Activated CD4-positive, alpha-beta T cell treated with anti-CD3 and anti-CD28 coated beads for 36 hours (primary cell): ENCODE measurements at regions of chr7 and their contacts with region 1.

Region 1: GRCh38 chr7:876167-876967 is at the start of gene GET4:
- DNase-seq: peak; percentile 96
- ATAC-seq: peak; percentile 79
- H3K4me3 Mint-ChIP-seq: peak within 1 kb of the TSS; percentile 92
- H3K27ac Mint-ChIP-seq: peak within 1 kb of the TSS; percentile 87
- H3K4me1 Mint-ChIP-seq: peaks cover 27% of the 10 kb centered on the region
- H3K27me3 Mint-ChIP-seq: no peaks in the 10 kb centered on the region
- total RNA-seq, gene GET4: 17.7 to 29.7 TPM

Region 2: DNA sequence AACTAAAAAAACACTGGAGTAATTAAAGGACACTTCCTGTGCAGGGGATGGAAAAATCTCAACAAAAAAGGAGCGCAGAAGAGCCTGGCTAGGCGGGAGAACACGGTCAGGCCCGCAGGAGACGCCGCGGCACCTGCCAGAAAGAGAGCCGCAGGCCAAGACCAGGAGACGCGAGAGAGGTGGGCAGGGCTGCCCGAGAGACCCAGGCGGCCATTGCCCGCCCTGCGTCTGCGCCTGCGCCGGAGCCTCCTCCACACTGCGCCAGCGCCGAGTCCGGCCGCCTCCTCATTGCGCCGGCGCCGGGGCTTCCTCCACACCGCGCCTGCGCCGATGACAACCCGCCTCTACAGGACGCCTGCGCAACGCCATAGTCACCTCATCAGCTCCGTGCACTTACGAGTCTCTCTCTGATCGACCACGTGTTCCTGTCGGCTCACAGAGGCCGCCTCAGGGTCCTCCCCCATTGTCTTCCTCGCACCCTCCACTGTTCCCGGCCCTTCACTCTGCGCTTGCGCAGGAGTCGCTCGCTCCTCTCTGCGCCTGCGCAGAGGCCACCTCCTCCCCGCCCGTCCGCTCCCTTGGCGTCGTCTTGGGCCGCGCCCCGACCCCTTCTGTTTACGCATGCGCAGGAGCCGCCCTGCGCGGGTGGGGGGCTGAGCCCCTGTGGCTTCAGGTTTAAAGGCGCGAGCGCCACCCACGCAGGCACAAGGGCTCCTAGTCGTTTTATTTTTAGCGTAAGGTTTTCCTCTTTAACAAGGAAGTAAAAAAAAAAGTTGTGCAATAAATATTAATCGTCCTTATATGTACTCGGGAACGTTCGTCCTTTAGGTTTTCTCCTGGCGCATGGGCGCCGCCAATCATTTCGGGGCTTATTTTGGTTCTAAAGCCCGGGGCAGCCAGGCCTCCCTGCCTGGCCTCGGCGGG is 727.2 kb before region 1 on chr7:
- CTCF ChIA-PET with region 1: no interaction called
- POLR2A ChIA-PET with region 1: no interaction called
- intact Hi-C with region 1: loop called in 1 of 2 experiments (anchors 1 kb)
- DNase-seq: peak; percentile 98
- ATAC-seq: peak; percentile 99
- H3K4me3 Mint-ChIP-seq: peak overlapping the region; percentile 87
- H3K27ac Mint-ChIP-seq: peak overlapping the region; percentile 97
- H3K4me1 Mint-ChIP-seq: peaks cover 13% of the 10 kb centered on the region
- H3K27me3 Mint-ChIP-seq: no peaks in the 10 kb centered on the region

Region 3: GRCh38 chr7:604001-604883 is 272.1 kb before region 1 on chr7:
- CTCF ChIA-PET with region 1: no interaction called
- POLR2A ChIA-PET with region 1: no interaction called
- intact Hi-C with region 1: loop called in 1 of 2 experiments (anchors 1 kb)
- DNase-seq: peak; percentile 97
- ATAC-seq: peak; percentile 59
- H3K4me3 Mint-ChIP-seq: peak overlapping the region; percentile 78
- H3K27ac Mint-ChIP-seq: peak overlapping the region; percentile 100
- H3K4me1 Mint-ChIP-seq: peaks cover 68% of the 10 kb centered on the region
- H3K27me3 Mint-ChIP-seq: no peaks in the 10 kb centered on the region

Region 4: GRCh38 chr7:816300-816750 is 60.0 kb before region 1 on chr7:
- CTCF ChIA-PET with region 1: interaction called, 11 read pairs
- POLR2A ChIA-PET with region 1: no interaction called
- intact Hi-C with region 1: loop called (anchors 1 to 5 kb)
- DNase-seq: peak; percentile 99
- ATAC-seq: peak; percentile 97
- H3K4me3 Mint-ChIP-seq: peak overlapping the region; percentile 60
- H3K27ac Mint-ChIP-seq: no peak overlapping the region
- H3K4me1 Mint-ChIP-seq: peaks cover 62% of the 10 kb centered on the region
- H3K27me3 Mint-ChIP-seq: peaks cover 6% of the 10 kb centered on the region

Region 5: DNA sequence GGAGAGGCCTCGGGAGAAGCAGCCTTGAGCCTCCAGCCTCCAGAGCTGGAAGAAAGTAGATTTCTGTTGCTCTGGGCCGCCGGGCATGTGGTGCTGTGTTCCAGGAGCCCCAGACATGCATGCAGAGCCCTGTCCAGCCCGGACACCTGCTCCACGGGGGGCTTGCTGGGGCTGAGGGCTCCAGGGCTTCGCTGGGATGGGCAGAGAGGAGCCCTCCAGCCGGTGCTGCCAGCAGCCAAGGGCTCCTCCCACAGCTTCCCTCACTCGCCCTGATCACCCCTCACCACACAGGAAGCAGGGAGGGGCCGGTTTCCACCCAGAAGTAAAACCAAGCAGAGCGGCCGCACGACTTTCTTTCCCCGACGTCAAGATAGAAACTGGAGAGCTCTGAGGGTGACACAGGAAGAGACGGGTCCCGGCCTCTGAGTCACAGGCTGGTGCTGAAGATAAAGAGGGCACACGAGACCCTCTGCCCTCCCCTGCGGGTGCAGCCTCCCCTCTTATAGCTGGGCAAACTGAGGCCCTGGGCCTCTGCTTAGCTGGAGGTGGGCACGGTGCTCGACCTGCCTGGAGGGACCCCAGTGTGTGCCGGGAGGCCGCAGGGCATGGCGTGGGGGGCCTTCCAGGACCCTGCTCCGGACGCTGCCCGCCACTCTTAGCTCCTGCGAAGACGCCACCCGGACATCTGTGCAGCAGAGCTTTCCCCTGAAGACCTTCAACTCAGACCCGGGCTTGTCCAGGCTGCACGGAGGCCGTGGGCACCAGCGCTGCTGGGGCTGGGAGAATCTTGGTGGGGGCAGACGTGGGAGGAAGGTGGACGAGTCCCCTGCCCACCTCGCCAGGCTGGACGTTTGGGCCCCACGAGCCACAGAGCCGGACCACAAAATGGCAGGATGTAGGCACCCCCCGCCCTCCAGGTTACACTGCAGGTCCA is 47.0 kb after region 1 on chr7:
- CTCF ChIA-PET with region 1: no interaction called
- POLR2A ChIA-PET with region 1: no interaction called
- intact Hi-C with region 1: loop called in 1 of 2 experiments (anchors 1 kb)
- DNase-seq: peak; percentile 97
- ATAC-seq: peak; percentile 92
- H3K4me3 Mint-ChIP-seq: peak overlapping the region; percentile 72
- H3K27ac Mint-ChIP-seq: peak overlapping the region; percentile 93
- H3K4me1 Mint-ChIP-seq: peaks cover 39% of the 10 kb centered on the region
- H3K27me3 Mint-ChIP-seq: no peaks in the 10 kb centered on the region

Region 6: DNA sequence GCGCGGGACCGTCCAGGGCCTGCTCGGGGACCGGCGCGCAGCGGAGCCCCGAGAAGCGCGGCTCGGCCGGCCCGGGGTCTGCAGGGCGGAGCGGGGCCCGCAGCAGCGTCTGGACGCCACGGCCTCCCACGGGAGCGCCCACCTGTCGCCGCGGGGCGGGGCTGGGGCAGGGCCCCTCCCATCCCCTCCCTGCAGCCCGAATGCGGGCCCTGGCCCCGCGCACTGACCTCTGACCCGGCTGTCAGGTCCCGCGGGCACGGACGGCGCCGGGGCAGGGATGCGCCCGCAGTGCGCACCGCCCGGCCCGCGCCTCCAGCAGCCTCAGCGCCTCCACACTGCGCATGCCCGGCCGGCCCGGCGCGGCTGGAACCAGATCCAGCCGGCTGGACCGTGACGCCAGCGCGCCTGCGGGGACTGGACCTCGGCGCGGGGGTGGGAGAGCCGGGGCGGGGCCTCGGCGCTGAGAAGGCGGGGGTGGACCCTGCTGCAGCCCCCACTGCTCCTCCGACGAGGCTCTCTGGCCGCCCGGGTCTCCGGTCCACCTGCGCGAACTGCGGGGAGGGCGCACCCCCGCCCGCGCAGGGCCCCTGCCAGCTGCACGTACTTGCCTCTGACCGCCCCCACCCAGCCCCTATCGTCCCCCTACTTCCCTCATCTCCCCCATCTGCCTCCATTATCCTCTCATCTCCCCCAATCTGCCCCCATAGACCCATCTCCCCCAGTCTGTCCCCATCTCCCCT is 151.8 kb after region 1 on chr7:
- CTCF ChIA-PET with region 1: no interaction called
- POLR2A ChIA-PET with region 1: no interaction called
- intact Hi-C with region 1: loop called in 1 of 2 experiments (anchors 5 kb)
- DNase-seq: peak; percentile 95
- ATAC-seq: peak; percentile 87
- H3K4me3 Mint-ChIP-seq: peak overlapping the region; percentile 69
- H3K27ac Mint-ChIP-seq: peak overlapping the region; percentile 75
- H3K4me1 Mint-ChIP-seq: peaks cover 28% of the 10 kb centered on the region
- H3K27me3 Mint-ChIP-seq: no peaks in the 10 kb centered on the region

Region 7: DNA sequence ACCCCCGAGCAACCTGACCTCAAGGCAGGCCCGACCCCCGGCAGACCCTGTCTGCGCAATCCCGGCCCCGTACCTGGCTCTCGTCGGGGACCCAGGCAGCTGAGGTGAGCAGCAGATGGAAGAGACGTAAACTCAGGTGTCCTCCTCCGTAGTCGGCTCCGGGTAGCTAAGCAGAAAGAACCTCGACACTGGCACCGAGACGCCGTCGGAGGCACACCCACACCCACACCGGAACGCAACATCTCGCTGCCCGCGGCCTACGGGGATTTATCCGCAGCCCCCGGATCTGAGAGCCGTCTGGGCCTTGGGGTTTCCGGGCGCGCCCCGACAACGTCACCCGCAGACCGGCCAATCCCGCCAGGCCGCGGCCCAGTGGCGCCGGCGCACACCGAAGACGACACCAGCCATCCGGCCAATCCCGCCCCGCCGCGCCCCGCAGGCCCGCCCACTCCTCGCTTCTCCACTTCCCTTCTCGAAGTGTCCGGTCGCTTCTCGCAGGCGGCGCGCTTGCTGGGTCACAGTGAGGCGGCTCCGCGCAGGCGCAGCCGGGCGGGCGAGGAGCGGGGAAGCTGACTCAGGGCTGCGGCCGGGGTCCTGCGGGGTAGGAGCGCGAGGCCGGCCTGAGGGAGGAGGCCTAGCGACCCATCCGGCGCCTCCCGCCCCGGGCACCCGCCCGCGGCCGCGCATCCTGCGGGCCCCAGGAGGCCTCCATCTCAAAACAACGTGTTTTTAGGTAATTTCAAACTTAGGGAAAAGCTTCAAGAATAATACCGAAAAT is 283.7 kb after region 1 on chr7 and contains the start of gene ZFAND2A:
- CTCF ChIA-PET with region 1: no interaction called
- POLR2A ChIA-PET with region 1: no interaction called
- intact Hi-C with region 1: loop called in 1 of 2 experiments (anchors 1 kb)
- DNase-seq: peak; percentile 99
- ATAC-seq: peak; percentile 98
- H3K4me3 Mint-ChIP-seq: peak within 1 kb of the TSS; percentile 84
- H3K27ac Mint-ChIP-seq: peak within 1 kb of the TSS; percentile 90
- H3K4me1 Mint-ChIP-seq: peaks cover 22% of the 10 kb centered on the region
- H3K27me3 Mint-ChIP-seq: no peaks in the 10 kb centered on the region
- total RNA-seq, gene ZFAND2A: 21.6 to 25.2 TPM